ENCODE measurements at regions of chr9 and their contacts with region 1.

Region 1: GRCh38 chr9:71911253-71912074 is at the start of gene C9orf85:
- DNase-seq: peak; percentile 97 to 98
- H3K4me3 ChIP-seq: peak within 1 kb of the TSS; percentile 91 to 98 (median 94)
- H3K27ac ChIP-seq: peak within 1 kb of the TSS; percentile 89
- H3K4me1 ChIP-seq: peaks cover 0 to 10% (median 2%) of the 10 kb centered on the region in 4 experiments; a peak in 5 of 7 replicates
- H3K27me3 ChIP-seq: no peaks in the 10 kb centered on the region
- CTCF ChIP-seq: no peak
- EP300 ChIP-seq: no peak
- POLR2A ChIP-seq: no peak; a peak in 1 of 3 replicates
- RAD21 ChIP-seq: no peak
- total RNA-seq, gene C9orf85: 13.2 and 14.5 TPM in 2 replicates

Region 2: GRCh38 chr9:71891557-71892189 is 19.8 kb before region 1 on chr9:
- CTCF ChIA-PET with region 1: no interaction called
- POLR2A ChIA-PET with region 1: interaction called, 13 read pairs
- DNase-seq: no peak
- H3K4me3 ChIP-seq: no peak overlapping the region
- H3K27ac ChIP-seq: no peak overlapping the region
- H3K4me1 ChIP-seq: peaks cover 0 to 4% (median 0%) of the 10 kb centered on the region in 4 experiments; a peak in 1 of 7 replicates
- H3K27me3 ChIP-seq: no peaks in the 10 kb centered on the region
- CTCF ChIP-seq: no peak
- EP300 ChIP-seq: no peak
- POLR2A ChIP-seq: no peak
- RAD21 ChIP-seq: no peak

Region 3: DNA sequence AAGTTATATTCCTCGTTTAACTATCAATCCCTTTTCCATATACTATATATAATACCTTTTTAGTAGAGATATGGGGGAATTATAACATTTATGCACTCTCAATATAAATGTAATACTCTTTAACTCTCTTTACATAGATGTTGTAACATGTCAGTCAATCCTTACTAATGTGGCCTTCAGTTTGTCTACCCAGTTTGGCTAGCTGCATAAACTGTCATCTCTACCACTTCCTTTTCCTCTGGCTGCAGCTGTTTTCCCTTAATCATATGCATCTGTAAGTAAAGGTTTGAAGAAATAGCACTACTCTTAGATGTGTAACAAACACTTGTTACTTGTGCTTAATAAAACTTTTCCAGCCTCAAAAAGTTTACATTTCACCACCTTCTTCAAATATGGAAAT is 13.9 kb before region 1 on chr9:
- CTCF ChIA-PET with region 1: no interaction called
- POLR2A ChIA-PET with region 1: interaction called, 15 read pairs
- DNase-seq: no peak
- H3K4me3 ChIP-seq: no peak overlapping the region
- H3K27ac ChIP-seq: no peak overlapping the region
- H3K4me1 ChIP-seq: peaks cover 0 to 11% (median 6%) of the 10 kb centered on the region in 4 experiments; a peak in 5 of 7 replicates
- H3K27me3 ChIP-seq: no peaks in the 10 kb centered on the region
- CTCF ChIP-seq: no peak
- EP300 ChIP-seq: no peak
- POLR2A ChIP-seq: no peak
- RAD21 ChIP-seq: no peak

Region 4: DNA sequence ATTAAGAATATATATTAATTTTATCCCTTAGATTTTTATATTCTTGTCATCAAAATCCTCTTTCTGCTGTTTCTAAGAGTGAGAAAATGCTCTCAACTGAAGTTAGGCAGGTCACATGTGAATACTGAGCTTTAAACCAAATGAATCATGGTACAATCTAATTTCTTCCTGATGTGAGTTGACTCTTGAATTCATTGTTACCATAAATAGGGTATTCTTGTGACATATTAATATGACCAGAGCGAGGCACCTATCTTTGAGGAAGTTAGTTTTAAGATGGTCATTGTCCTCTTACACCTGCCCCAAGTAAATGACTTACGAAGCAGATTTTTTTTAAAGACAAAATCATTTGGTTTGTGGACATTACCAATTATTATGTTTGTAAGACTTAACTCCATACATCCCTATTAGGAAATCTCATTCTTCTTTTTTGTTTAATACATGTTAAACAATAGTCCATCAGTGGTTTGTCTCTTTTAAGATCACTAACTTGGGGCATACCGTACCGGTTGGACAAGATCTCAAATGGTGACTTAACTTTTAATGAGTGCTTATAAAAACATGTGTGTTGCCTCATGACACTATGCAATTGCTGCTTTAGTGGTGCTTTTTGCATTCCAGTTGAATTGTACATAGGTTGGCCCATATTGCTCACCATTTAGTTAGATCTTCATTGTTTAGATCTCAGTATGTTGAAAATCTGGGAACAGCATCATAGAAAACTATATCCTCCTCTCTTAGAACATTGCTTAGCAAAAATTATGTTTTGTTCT is 17.6 kb after region 1 on chr9:
- CTCF ChIA-PET with region 1: interaction called, 3 read pairs
- POLR2A ChIA-PET with region 1: interaction called, 73 read pairs
- DNase-seq: no peak
- H3K4me3 ChIP-seq: no peak overlapping the region
- H3K27ac ChIP-seq: no peak overlapping the region
- H3K4me1 ChIP-seq: peaks cover 0 to 11% (median 3%) of the 10 kb centered on the region in 4 experiments; a peak in 3 of 7 replicates
- H3K27me3 ChIP-seq: no peaks in the 10 kb centered on the region
- CTCF ChIP-seq: no peak
- EP300 ChIP-seq: no peak
- POLR2A ChIP-seq: no peak
- RAD21 ChIP-seq: no peak

Region 5: DNA sequence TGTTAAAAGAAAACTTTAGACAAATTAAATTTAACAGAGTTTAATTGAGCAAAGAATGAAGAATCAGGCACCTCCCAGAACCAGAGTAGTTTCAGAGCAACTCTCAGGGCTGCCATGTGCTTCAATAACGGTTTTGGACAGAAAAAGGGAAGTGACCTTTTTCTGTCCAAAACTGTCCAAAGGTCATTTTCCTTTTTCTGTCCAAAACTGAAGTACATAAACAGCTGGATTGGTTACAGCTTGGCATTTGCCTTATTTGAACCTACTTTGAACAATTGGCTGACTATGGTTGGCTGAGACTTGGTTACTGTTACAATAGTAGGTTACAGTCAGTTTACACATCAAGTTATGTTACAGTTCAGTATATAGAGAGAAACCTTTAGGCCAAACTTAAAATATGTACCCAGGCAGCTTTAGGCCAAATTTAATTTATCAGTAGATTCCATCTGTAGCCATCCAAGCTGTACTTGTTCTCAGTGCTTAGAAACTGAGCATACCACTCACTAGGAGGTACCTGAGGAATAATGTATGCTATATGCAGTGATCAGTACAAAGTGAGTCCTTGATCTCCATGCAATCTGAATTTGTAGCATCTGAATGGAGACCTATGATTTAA is 43.9 kb after region 1 on chr9:
- CTCF ChIA-PET with region 1: no interaction called
- POLR2A ChIA-PET with region 1: interaction called, 17 read pairs
- DNase-seq: no peak
- H3K4me3 ChIP-seq: no peak overlapping the region
- H3K27ac ChIP-seq: no peak overlapping the region
- H3K4me1 ChIP-seq: peaks cover 0 to 13% (median 6%) of the 10 kb centered on the region in 4 experiments; a peak in 4 of 7 replicates
- H3K27me3 ChIP-seq: no peaks in the 10 kb centered on the region
- CTCF ChIP-seq: no peak
- EP300 ChIP-seq: no peak
- POLR2A ChIP-seq: no peak
- RAD21 ChIP-seq: no peak

Measured in H1 (cell line).